ENCODE measurements at regions of chr10 and their contacts with region 1.

Region 1: DNA sequence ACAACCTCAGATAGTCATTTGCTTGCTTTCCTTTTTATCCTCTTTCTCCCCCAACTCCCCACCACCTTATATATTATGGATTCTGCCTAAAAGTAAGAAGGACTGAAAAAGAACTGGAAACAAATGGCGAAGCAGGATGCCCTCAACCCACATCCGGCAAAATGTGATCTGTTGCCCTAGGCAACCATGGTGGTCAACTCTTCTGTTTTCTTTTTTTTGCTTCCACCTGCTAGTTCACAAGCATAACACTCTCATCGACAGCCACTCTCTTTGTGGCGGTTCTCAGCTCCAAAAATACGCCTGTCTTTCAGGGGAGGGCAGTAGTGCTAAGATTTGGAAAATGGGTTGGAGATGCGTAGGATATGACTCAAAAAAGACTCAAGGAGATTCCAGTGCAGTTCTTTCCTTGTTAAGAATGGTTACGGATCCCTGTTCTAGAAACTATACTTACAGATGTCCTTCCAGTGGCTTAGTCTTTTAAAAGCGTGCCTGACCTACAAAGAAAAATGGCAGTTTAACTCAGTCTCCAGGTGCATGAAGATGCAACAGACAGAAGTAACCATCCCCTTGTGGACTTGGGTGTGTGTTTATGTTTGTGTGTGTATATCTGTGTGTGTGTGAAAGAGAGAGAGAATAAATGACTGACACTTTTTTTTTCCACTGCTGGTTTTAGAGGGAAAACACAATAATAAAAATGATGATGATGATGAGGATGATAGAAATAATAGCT is 10.7 kb downstream of the APBB1IP start:
- DNase-seq: peak; percentile 84
- ATAC-seq: peak; percentile 77
- H3K4me3 ChIP-seq: peak overlapping the region; percentile 44; the same call in 1 of the 2 replicates
- H3K27ac ChIP-seq: peak overlapping the region; percentile 84
- H3K4me1 ChIP-seq: peaks cover 26% of the 10 kb centered on the region
- H3K27me3 ChIP-seq: no peaks in the 10 kb centered on the region
- CTCF ChIP-seq: peak in 1 of 3 experiments; percentile 11; a peak in 1 of 6 replicates
- EP300 ChIP-seq: peak in 1 of 2 experiments; percentile 80; a peak in 2 of 4 replicates
- POLR2A ChIP-seq: 0 out of 2 replicates have a peak, but pooled peaks have one; percentile 27
- RAD21 ChIP-seq: peak; percentile 43

Region 2: GRCh38 chr10:26372513-26373354 is 76.1 kb before region 1 on chr10:
- CTCF ChIA-PET with region 1: no interaction called
- POLR2A ChIA-PET with region 1: no interaction called
- RAD21 ChIA-PET with region 1: no interaction called
- SMC1A ChIA-PET with region 1: no interaction called
- in situ Hi-C with region 1: no loop called
- intact Hi-C with region 1: loop called (anchors 5 kb)
- DNase-seq: peak; percentile 79
- ATAC-seq: peak; percentile 78
- H3K4me3 ChIP-seq: peak overlapping the region; percentile 53
- H3K27ac ChIP-seq: peak overlapping the region; percentile 93
- H3K4me1 ChIP-seq: peaks cover 24% of the 10 kb centered on the region
- H3K27me3 ChIP-seq: no peaks in the 10 kb centered on the region
- CTCF ChIP-seq: no peak
- EP300 ChIP-seq: peak; percentile 68 to 86; a peak in 3 of 4 replicates
- POLR2A ChIP-seq: no peak
- RAD21 ChIP-seq: no peak; the same call in 1 of the 2 replicates

Region 3: GRCh38 chr10:26437637-26438461 is 11.0 kb before region 1 on chr10 and contains the start of gene APBB1IP:
- CTCF ChIA-PET with region 1: interaction called, 3 read pairs
- POLR2A ChIA-PET with region 1: interaction called, 8 read pairs
- RAD21 ChIA-PET with region 1: interaction called, 15 read pairs
- SMC1A ChIA-PET with region 1: interaction called, 31 read pairs
- in situ Hi-C with region 1: no loop called
- intact Hi-C with region 1: loop called (anchors 1 kb)
- DNase-seq: peak; percentile 61
- ATAC-seq: peak; percentile 77
- H3K4me3 ChIP-seq: peak within 1 kb of the TSS; percentile 89
- H3K27ac ChIP-seq: peak within 1 kb of the TSS; percentile 95
- H3K4me1 ChIP-seq: peaks cover 15% of the 10 kb centered on the region; the same call in 1 of the 2 replicates
- H3K27me3 ChIP-seq: no peaks in the 10 kb centered on the region
- CTCF ChIP-seq: peak in 2 of 3 experiments; percentile 4 to 6; a peak in 1 of 6 replicates
- EP300 ChIP-seq: peak in 1 of 2 experiments; percentile 6; a peak in 1 of 4 replicates
- POLR2A ChIP-seq: peak; percentile 64
- RAD21 ChIP-seq: peak; percentile 20
- polyA plus RNA-seq, gene APBB1IP: 7.3 to 11.4 TPM

Region 4: GRCh38 chr10:26468700-26469099 is 19.8 kb after region 1 on chr10:
- CTCF ChIA-PET with region 1: interaction called, 5 read pairs
- POLR2A ChIA-PET with region 1: interaction called, 5 read pairs
- RAD21 ChIA-PET with region 1: interaction called, 5 read pairs
- SMC1A ChIA-PET with region 1: interaction called, 11 read pairs
- in situ Hi-C with region 1: no loop called
- intact Hi-C with region 1: no loop called
- DNase-seq: no peak
- ATAC-seq: peak; percentile 72
- H3K4me3 ChIP-seq: peak overlapping the region; percentile 61
- H3K27ac ChIP-seq: peak overlapping the region; percentile 67
- H3K4me1 ChIP-seq: peaks cover 75% of the 10 kb centered on the region
- H3K27me3 ChIP-seq: no peaks in the 10 kb centered on the region
- CTCF ChIP-seq: no peak
- EP300 ChIP-seq: no peak
- POLR2A ChIP-seq: 0 out of 2 replicates have a peak, but pooled peaks have one; percentile 24
- RAD21 ChIP-seq: no peak

Region 5: DNA sequence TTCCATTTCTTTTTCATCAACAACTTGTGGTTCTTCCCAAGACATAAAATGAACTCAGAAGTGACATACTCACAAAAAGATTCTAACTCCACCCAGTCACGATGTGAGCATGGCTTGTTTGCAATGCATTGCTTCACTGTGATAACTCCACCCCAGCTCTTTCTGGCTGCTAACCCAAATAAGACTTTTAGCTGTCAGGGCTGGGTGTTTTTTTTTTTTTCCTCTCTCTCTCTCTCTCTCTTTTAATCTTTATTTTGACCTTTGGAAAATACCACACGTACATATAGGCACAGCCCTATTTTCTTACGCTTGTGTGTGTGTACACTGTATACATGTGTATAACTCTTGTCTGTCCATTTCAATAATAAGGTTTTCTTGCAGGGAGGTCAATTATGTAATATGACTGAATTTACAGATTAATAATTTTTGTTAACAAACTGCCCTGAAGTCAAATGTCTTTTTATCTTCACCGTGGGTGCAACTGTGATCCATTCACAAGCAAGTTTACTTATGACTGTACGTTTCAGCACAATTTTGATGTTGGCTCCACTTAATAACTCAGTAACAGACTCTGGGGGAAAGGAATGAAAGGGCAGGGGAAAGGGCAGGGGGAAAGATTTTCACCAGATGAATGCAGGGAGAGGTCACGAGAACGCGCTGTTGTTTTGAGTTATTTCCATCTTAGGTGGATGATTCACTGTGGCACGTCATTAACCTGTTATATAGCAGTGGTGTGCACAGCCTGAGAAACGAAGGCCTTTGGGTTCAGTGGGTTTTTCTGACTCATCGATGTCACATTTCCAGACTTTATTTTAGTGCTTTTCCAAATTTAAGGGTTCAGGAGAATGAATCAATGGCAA is 38.4 kb after region 1 on chr10:
- CTCF ChIA-PET with region 1: no interaction called
- POLR2A ChIA-PET with region 1: interaction called, 4 read pairs
- RAD21 ChIA-PET with region 1: interaction called, 3 read pairs
- SMC1A ChIA-PET with region 1: interaction called, 7 read pairs
- in situ Hi-C with region 1: no loop called
- intact Hi-C with region 1: loop called (anchors 2 kb)
- DNase-seq: peak; percentile 79
- ATAC-seq: peak; percentile 94
- H3K4me3 ChIP-seq: peak overlapping the region; percentile 11; the same call in 1 of the 2 replicates
- H3K27ac ChIP-seq: peak overlapping the region; percentile 67
- H3K4me1 ChIP-seq: peaks cover 9% of the 10 kb centered on the region
- H3K27me3 ChIP-seq: no peaks in the 10 kb centered on the region
- CTCF ChIP-seq: no peak
- EP300 ChIP-seq: peak; percentile 83 to 88
- POLR2A ChIP-seq: no peak
- RAD21 ChIP-seq: no peak

Region 6: GRCh38 chr10:26540601-26541000 is 91.7 kb after region 1 on chr10:
- CTCF ChIA-PET with region 1: no interaction called
- POLR2A ChIA-PET with region 1: no interaction called
- RAD21 ChIA-PET with region 1: no interaction called
- SMC1A ChIA-PET with region 1: no interaction called
- in situ Hi-C with region 1: no loop called
- intact Hi-C with region 1: loop called (anchors 5 kb)
- DNase-seq: peak; percentile 37
- ATAC-seq: peak; percentile 68
- H3K4me3 ChIP-seq: no peak overlapping the region
- H3K27ac ChIP-seq: 0 out of 2 replicates have a peak overlapping the region, but pooled peaks have one; percentile 37
- H3K4me1 ChIP-seq: peaks cover 28% of the 10 kb centered on the region
- H3K27me3 ChIP-seq: no peaks in the 10 kb centered on the region
- CTCF ChIP-seq: no peak
- EP300 ChIP-seq: no peak
- POLR2A ChIP-seq: no peak
- RAD21 ChIP-seq: no peak